ENCODE measurements at regions of chr22 and their contacts with region 1.

Region 1: DNA sequence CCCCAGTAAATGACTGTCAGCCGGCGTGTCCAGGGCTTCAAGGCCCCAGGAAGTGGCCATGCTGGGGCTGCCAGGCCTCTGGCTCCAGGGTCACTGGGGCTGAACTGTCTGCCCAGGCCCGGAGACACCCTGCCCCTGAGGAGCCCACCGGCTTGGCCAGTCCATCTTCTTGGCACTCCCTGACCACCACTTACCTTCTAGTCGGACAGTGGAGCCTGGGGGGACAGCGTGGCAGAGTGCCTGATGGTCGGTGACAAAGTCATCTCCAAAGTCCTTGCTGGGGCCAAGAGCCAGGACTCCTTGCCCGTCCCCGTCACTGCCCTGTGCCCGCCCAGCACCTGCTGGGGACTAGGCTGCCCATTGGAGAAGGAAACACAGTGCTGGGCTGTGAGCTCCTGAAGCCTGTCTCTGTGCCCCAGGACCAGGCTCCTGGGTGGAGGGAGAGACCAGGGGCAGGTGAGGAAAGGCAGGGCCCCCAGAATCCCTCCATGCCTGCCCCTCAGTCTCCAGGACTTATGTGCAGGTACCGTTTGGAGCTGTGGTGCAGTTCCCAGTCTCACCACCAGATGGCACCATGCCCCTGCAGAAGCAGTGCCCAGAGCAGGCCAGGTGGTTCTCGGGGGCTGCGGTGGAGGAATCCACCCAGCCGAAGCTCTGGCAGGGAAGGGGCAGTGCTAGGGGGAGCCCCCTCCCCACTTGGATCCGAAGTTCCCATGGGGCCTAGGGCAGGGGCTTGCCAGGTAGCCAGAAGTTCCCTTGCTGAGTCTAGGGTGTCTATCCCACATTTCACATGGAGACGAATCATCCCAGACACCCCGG is 6.0 kb upstream of the CCDC188 start:
- DNase-seq: peak; percentile 97
- ATAC-seq: peak; percentile 64
- H3K4me3 Mint-ChIP-seq: no peak overlapping the region
- H3K27ac Mint-ChIP-seq: no peak overlapping the region
- H3K4me1 Mint-ChIP-seq: peaks cover 7% of the 10 kb centered on the region
- H3K27me3 Mint-ChIP-seq: no peaks in the 10 kb centered on the region
- CTCF ChIP-seq: peak; percentile 100

Region 2: GRCh38 chr22:19986410-19987341 is 170.1 kb before region 1 on chr22:
- CTCF ChIA-PET with region 1: no interaction called
- POLR2A ChIA-PET with region 1: no interaction called
- DNase-seq: peak; percentile 83
- ATAC-seq: peak; percentile 82
- H3K4me3 Mint-ChIP-seq: peak overlapping the region; percentile 70
- H3K27ac Mint-ChIP-seq: no peak overlapping the region
- H3K4me1 Mint-ChIP-seq: peaks cover 5% of the 10 kb centered on the region; the same call in 1 of the 2 replicates
- H3K27me3 Mint-ChIP-seq: no peaks in the 10 kb centered on the region
- CTCF ChIP-seq: no peak

Region 3: GRCh38 chr22:20174785-20175596 is 18.2 kb after region 1 on chr22:
- CTCF ChIA-PET with region 1: interaction called, 27 read pairs
- POLR2A ChIA-PET with region 1: no interaction called
- DNase-seq: no peak
- ATAC-seq: peak; percentile 67
- H3K4me3 Mint-ChIP-seq: no peak overlapping the region
- H3K27ac Mint-ChIP-seq: no peak overlapping the region
- H3K4me1 Mint-ChIP-seq: no peaks in the 10 kb centered on the region
- H3K27me3 Mint-ChIP-seq: no peaks in the 10 kb centered on the region
- CTCF ChIP-seq: no peak

Region 4: DNA sequence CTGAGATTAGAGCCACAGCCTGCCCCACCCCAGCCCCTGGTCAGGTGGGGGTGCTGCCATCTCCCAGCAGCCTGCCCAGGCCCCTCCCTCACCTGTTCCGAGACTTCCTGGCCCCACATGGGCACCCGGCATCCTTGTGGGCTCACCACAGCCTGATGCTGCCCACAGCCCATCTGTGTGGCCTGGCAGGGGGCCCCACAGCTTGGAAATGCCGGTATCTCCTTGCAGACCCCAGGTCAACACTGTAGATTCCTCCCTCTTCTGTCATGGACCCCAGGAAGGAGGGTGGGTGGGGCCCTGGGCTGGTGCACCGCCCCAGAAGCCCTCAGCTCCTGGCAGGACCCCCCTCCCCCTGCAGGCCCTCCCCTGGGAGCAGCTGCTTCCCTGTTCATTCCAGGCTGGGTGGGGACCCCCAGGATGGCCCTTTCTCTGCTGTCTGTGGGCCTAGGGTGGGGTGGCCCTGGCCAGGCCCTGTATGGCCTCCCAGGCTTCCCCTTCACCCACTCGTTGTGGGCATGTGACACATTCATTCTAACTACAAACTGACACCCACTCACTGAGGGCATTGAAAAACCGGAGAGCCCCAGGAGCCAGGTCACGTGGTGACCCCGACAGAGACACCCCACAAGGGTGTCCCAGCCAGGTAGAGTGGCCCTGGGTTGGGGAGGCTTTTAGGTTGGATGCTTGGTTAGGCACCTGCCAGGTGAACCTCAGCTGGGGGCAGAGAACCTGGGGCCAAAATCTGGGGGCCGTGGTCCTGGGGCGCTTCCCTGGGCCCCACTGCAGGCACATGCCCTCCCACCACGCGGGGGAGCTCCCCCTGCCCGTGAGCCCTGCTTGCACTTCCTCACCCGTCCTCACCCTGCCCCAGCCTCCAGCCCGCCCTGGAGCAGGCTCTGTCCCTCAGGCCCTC is 38.1 kb after region 1 on chr22:
- CTCF ChIA-PET with region 1: interaction called, 13 read pairs
- POLR2A ChIA-PET with region 1: no interaction called
- DNase-seq: no peak
- ATAC-seq: peak; percentile 60; the same call in 1 of the 2 replicates
- H3K4me3 Mint-ChIP-seq: no peak overlapping the region
- H3K27ac Mint-ChIP-seq: no peak overlapping the region
- H3K4me1 Mint-ChIP-seq: no peaks in the 10 kb centered on the region
- H3K27me3 Mint-ChIP-seq: no peaks in the 10 kb centered on the region
- CTCF ChIP-seq: no peak

Region 5: GRCh38 chr22:20219667-20220628 is 63.1 kb after region 1 on chr22:
- CTCF ChIA-PET with region 1: interaction called, 12 read pairs
- POLR2A ChIA-PET with region 1: no interaction called
- DNase-seq: no peak
- ATAC-seq: peak; percentile 54
- H3K4me3 Mint-ChIP-seq: no peak overlapping the region
- H3K27ac Mint-ChIP-seq: no peak overlapping the region
- H3K4me1 Mint-ChIP-seq: no peaks in the 10 kb centered on the region
- H3K27me3 Mint-ChIP-seq: peaks cover 3% of the 10 kb centered on the region; the same call in 1 of the 2 replicates
- CTCF ChIP-seq: no peak

Region 6: DNA sequence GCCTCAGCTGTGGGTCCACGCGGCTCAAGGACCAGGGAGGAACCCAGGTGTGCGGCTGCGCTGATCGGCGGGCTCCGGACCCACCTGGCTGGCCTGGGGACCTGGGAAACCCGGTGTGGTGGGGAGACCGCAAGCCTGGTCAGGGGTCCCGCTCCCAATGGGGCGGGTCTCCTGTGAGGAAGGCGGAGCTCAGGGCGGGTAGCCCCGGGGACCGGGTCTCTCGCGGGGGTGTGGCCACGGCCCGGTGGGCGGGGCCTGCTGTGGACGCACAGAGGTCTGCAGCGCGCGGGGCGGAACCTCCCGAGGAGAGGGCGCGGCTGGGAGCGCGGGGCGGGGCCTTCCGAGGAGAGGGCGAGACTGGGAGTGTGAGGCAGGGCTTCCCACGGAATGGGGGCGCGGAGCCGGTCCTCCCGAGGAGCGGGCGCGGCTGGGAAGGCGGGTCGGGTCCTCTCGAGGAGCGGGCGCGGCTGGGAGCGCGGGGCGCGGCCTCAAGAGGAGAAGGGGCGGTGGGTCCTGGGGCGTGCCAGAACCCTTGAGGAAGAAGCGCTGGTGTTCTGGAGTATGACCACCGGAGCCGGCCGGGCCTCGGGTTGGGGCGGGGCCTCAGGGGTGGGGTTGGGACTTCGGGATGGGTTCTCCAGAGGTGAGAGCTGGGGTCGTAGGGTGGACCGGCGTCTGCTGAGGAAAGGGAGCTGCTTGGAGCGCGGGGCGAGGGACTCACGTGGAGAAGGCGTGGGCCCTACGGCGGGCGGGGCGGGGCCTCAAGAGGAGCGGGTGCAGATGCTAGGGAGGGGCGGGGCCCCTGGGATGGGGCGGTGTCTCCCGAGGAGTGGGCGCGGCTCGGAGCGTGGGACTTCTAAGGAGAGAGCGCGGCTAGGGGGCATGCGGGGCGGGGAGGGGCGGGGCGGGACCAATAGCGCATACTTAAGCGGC is 142.2 kb after region 1 on chr22:
- CTCF ChIA-PET with region 1: interaction called, 14 read pairs
- POLR2A ChIA-PET with region 1: no interaction called
- DNase-seq: peak; percentile 96
- ATAC-seq: peak; percentile 85
- H3K4me3 Mint-ChIP-seq: peak overlapping the region; percentile 65
- H3K27ac Mint-ChIP-seq: no peak overlapping the region
- H3K4me1 Mint-ChIP-seq: peaks cover 6% of the 10 kb centered on the region; the same call in 1 of the 2 replicates
- H3K27me3 Mint-ChIP-seq: peaks cover 53% of the 10 kb centered on the region
- CTCF ChIP-seq: no peak

Measured in WTC11 (cell line).